ENCODE measurements at regions of chr2 and their contacts with region 1.

Region 1: DNA sequence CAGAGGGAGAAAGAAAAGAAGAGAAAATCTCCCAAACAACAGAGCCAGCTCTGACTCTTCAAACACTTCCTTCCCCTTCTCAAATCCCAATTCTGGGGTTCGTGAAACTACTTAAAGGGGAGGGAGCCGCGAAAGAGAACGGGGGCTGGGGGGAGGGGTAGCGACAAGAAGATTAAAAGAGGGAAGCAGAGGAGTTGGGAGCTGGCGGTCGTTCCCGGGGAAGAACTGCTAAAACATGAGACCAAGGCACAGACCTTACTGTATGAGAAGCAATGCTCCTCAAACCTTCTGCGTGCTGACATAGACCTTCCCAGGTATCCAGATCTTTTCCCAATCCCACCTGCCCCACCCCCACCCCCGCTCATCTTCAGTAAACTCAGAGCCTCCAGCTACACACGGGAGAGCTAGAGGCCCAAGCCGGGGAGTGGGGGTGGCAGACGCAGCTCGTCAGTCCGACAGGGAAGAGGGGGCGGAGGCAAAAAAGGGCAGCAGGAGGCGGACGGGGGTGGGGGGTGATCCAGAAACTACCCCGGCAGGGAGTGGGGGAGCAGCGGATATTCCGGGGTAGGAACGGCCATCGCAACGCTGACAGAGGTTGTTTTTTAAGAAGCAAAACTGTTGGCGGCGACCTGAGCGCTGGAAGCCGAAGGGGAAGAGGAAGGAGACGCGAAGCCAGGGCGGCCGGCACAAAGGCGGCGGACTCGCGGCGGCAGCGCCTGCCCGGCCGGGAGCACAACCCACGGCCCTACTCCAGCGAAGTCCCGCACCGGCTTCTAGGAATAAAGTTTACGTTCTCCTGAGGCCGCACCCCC is 1.0 kb downstream of the BAZ2B start:
- DNase-seq: peak; percentile 84
- H3K4me3 ChIP-seq: peak overlapping the region; percentile 79
- H3K27ac ChIP-seq: peak overlapping the region; percentile 96
- H3K27me3 ChIP-seq: no peaks in the 10 kb centered on the region
- CTCF ChIP-seq: no peak

Region 2: DNA sequence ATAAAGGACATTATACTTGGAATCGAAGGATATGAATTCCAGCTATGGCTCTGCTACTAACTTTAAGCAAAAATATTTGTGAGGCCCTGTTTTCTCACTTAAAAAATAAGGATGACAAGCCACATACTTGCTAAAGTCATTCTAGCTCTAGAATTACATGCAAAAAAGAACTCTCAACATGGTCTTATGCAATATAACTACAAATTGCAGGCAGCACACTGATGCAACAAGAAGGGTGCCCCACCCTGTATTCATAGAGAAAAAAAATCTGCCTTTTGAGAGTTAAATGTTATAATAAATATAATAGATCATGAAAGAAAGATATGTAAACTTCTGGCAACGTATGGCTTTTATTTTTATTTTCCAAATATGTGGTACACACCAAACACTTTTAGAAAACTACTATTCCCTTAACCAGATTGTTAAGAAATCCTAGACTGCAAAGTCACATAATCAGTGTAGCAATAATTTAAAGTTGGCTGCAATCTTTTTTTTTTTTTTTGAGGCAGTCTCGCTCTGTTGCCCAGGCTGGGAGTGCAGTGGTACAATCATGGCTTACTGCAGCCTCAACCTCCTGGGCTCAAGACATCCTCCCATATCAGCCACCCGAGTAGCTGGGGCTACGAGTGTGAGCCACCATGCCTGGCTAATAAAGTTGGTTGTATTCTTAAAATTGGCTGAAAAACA is 288.6 kb before region 1 on chr2:
- CTCF ChIA-PET with region 1: no interaction called
- POLR2A ChIA-PET with region 1: interaction called, 11 read pairs
- DNase-seq: no peak
- H3K4me3 ChIP-seq: no peak overlapping the region
- H3K27ac ChIP-seq: no peak overlapping the region
- H3K27me3 ChIP-seq: no peaks in the 10 kb centered on the region
- CTCF ChIP-seq: no peak

Region 3: DNA sequence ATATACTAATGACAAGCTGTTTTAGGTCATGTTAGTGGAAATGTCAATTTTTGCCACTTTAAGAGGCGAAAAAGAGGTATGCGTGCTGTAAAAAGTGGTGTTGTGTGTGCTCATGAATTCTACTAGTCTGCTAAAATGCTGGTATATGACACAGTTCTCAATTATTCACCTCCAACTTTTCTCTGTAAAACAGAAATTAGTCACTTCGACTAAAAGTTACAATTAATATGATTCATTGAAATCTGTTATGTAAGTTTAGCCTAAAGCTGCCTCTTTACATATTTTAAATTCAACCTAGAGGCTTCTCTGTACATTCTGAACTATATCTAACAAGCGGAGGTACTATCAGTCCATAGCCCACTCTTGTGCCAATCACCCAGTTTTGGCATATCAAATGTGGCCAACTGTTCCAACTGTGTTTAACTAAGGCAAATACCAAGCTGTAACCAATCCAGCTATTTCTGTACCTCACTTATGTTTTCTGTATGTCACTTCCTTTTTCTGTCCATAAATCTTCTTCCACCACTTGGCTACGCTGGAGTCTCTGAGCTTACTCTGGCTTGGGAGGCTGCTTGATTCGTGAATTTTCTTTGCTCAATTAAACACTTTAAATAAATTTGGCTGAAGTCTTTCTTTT is 19.8 kb before region 1 on chr2:
- CTCF ChIA-PET with region 1: interaction called, 7 read pairs
- POLR2A ChIA-PET with region 1: interaction called, 13 read pairs
- DNase-seq: no peak
- H3K4me3 ChIP-seq: no peak overlapping the region
- H3K27ac ChIP-seq: no peak overlapping the region
- H3K27me3 ChIP-seq: no peaks in the 10 kb centered on the region
- CTCF ChIP-seq: no peak

Region 4: GRCh38 chr2:159712143-159712928 is 97.0 kb after region 1 on chr2 and contains the start of gene MARCHF7:
- CTCF ChIA-PET with region 1: interaction called, 5 read pairs
- POLR2A ChIA-PET with region 1: interaction called, 46 read pairs
- DNase-seq: peak; percentile 91
- H3K4me3 ChIP-seq: peak within 1 kb of the TSS; percentile 98
- H3K27ac ChIP-seq: peak within 1 kb of the TSS; percentile 96
- H3K27me3 ChIP-seq: no peaks in the 10 kb centered on the region
- CTCF ChIP-seq: peak; percentile 58
- polyA plus RNA-seq, gene MARCHF7: 68.6 and 76.1 TPM in 2 replicates